ENCODE measurements at regions of chr12 and their contacts with region 1.

Region 1: GRCh38 chr12:50763639-50764285 is at the start of gene ATF1:
- DNase-seq: peak; percentile 88 to 90
- ATAC-seq: peak; percentile 93 to 97 (median 95)
- H3K4me3 ChIP-seq: peak within 1 kb of the TSS; percentile 59 to 100 (median 98)
- H3K27ac ChIP-seq: peak within 1 kb of the TSS; percentile 93 to 99 (median 98)
- H3K4me1 ChIP-seq: peaks cover 1 to 47% (median 27%) of the 10 kb centered on the region in 9 donors
- H3K27me3 ChIP-seq: no peaks in the 10 kb centered on the region
- CTCF ChIP-seq: no peak
- total RNA-seq, gene ATF1: 19.6 to 31.9 (median 24.3) TPM

Region 2: DNA sequence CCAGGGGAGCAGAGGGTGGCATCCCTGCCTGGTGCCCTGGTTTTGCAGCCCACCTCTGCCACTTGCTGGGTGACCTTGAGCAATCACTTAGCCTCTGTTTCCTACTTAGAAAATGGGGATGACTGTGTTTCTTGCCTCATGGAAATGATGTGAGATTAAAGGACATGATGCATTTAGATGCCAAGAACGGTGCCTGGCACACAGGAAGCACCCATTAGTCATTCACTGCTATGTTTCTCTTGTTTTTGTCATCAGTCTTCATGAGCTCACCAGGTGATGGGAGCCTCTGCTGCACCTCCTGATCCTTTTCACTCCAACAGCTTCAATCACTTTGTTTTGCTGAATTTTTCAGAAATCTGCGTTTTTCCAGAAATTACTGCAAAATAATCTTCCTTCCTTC is 23.5 kb before region 1 on chr12:
- intact Hi-C with region 1: no loop called
- DNase-seq: no peak
- ATAC-seq: no peak
- H3K4me3 ChIP-seq: no peak overlapping the region
- H3K27ac ChIP-seq: no peak overlapping the region
- H3K4me1 ChIP-seq: no peaks in the 10 kb centered on the region
- H3K27me3 ChIP-seq: no peaks in the 10 kb centered on the region
- CTCF ChIP-seq: no peak

Region 3: GRCh38 chr12:50922820-50923219 is 159.1 kb after region 1 on chr12:
- intact Hi-C with region 1: no loop called
- DNase-seq: no peak
- ATAC-seq: peak in 2 of 8 donors; percentile 4 to 11
- H3K4me3 ChIP-seq: peak overlapping the region in 5 of 10 donors; percentile 69 to 84 (median 78)
- H3K27ac ChIP-seq: peak overlapping the region; percentile 77 to 94 (median 90)
- H3K4me1 ChIP-seq: peaks cover 0 to 50% (median 42%) of the 10 kb centered on the region in 9 donors
- H3K27me3 ChIP-seq: no peaks in the 10 kb centered on the region
- CTCF ChIP-seq: no peak

Region 4: DNA sequence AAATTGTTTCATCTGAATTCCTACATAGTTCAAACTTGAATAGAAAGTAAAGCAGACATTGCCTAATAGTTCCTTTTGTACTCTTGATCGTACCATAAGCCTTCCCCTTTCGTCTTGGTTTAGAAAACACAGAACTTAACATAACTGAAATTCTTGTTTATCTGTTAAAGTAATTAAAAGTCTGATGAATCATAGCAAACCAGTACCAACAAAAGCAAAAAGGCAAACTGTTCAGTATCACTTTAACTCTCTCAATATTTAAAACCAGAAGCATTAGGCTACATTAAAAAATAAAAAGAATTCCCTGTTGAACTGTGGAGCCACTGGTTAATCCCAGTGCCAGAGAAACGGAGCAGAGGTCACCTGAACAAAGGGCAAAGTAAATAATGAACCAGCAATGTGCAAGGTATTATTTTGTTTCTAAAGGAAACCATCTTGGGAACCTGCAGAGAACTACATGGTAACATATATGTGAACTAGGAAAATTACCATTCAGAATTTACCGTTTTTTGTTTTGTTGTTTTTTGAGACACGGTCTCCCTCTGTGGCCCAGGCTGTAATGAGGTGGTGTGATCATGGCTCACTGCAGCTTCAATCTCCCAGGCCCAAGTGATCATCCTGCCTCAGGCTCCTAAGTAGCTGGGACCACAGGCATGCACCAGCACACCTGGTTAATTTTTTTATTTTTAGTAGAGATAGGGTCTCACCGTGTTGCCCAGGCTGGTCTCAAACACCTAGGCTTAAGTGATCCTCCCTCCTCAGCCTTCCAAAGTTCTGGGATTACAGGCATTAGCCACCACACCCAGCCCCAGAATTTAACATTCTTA is 171.4 kb after region 1 on chr12:
- intact Hi-C with region 1: loop called in 1 of 10 experiments (anchors 5 kb)
- DNase-seq: no peak
- ATAC-seq: peak in 6 of 8 donors; percentile 37 to 77 (median 49)
- H3K4me3 ChIP-seq: peak overlapping the region in 1 of 10 donors; percentile 12
- H3K27ac ChIP-seq: peak overlapping the region; percentile 37 to 85 (median 59)
- H3K4me1 ChIP-seq: peaks cover 6 to 41% (median 30%) of the 10 kb centered on the region in 9 donors
- H3K27me3 ChIP-seq: no peaks in the 10 kb centered on the region
- CTCF ChIP-seq: no peak